Mammary epithelial cell (primary cell): ENCODE measurements at regions of chr13 and their contacts with region 1.

Region 1: GRCh38 chr13:82654866-82655855 is 1227.1 kb downstream of the SLITRK1 start:
- DNase-seq: peak; percentile 75
- H3K4me3 ChIP-seq: no peak overlapping the region
- H3K27ac ChIP-seq: no peak overlapping the region
- H3K4me1 ChIP-seq: no peaks in the 10 kb centered on the region
- H3K27me3 ChIP-seq: no peaks in the 10 kb centered on the region
- CTCF ChIP-seq: no peak

Region 2: DNA sequence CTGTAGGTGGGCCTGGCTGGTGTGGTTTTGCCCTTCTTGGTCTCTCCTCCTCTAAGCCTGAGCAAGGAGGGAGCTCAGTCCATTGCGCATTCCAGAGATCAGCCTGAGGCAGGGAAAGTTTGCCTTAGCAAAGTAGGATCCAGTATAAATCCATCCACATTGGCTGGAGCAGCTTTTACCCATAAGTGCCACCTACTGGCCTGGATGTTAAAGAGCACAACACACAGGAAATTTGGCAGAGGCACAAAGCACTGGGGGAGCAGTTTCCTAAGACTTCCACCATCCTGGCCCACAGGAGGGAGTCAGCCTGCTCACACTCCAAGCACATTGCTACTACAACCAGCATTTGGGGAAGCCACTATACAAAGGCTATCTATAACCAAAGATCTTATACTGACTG is 102.9 kb after region 1 on chr13:
- CTCF ChIA-PET with region 1: no interaction called
- dilution Hi-C with region 1: no loop called
- in situ Hi-C with region 1: no loop called
- intact Hi-C with region 1: loop called (anchors 2 kb)
- DNase-seq: peak; percentile 46
- H3K4me3 ChIP-seq: no peak overlapping the region
- H3K27ac ChIP-seq: no peak overlapping the region
- H3K4me1 ChIP-seq: no peaks in the 10 kb centered on the region
- H3K27me3 ChIP-seq: no peaks in the 10 kb centered on the region
- CTCF ChIP-seq: peak; percentile 59 to 69

Region 3: DNA sequence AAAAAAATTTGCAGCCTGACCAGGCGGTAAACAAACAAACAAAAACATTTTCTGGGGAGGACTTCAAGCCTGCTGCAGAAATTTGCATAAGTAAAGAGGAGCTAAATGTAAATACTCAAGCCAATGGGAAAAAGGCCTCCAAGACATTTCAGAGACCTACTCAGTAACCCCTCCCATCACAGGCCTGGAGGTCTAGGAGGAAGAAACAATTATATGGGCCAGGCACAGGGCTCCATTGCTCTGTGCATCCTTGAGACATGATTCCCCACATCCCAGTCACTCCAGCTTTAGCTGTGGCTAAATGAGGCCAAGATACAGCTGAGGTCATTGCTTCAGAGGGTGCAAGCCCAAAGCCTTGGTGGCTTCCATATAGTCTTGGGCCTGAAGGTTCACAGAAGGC is 433.7 kb after region 1 on chr13:
- CTCF ChIA-PET with region 1: no interaction called
- dilution Hi-C with region 1: no loop called
- in situ Hi-C with region 1: no loop called
- intact Hi-C with region 1: no loop called
- DNase-seq: no peak
- H3K4me3 ChIP-seq: no peak overlapping the region
- H3K27ac ChIP-seq: no peak overlapping the region
- H3K4me1 ChIP-seq: no peaks in the 10 kb centered on the region
- H3K27me3 ChIP-seq: no peaks in the 10 kb centered on the region
- CTCF ChIP-seq: no peak